Ascending aorta (tissue), 2 donors: ENCODE measurements at regions of chr3 and their contacts with region 1.

Region 1: DNA sequence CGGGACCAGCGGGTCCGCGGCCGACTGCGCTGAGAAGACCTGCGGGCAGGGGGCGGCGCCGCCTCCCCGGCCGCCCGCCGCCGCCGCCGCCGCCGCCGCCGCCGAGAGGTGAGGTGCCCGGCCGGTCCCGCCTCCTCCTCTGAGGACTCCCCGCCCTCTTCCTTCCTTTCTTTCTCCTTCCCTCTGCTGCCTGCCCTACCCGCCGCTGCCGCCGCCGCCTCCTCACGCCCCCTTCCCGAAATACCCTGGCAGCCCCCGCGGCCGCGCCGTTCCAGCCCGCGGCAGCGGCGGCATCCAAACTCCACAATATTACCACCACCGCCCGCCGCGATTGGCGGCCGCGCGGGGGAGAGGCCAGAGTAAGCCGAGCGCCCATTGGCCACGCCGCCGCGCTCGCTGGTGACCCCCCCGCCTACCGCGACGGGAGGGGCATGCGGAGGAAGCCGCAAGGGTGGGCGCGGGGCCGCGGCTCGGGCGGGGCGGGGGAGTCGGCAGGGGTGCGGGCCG is 61.8 kb upstream of the ANKRD28 start:
- DNase-seq: peak; percentile 53 to 92
- H3K4me3 ChIP-seq: peak overlapping the region; percentile 91 to 98
- H3K27ac ChIP-seq: peak overlapping the region; percentile 72 to 73
- H3K4me1 ChIP-seq: peaks cover 6 to 9% of the 10 kb centered on the region in 2 donors
- H3K27me3 ChIP-seq: no peaks in the 10 kb centered on the region
- CTCF ChIP-seq: no peak

Region 2: GRCh38 chr3:15768421-15769255 is 90.9 kb before region 1 on chr3:
- intact Hi-C with region 1: loop called (anchors 5 kb)
- DNase-seq: no peak
- H3K4me3 ChIP-seq: no peak overlapping the region
- H3K27ac ChIP-seq: peak overlapping the region; percentile 28 to 47
- H3K4me1 ChIP-seq: peaks cover 0 to 13% of the 10 kb centered on the region in 2 donors
- H3K27me3 ChIP-seq: no peaks in the 10 kb centered on the region
- CTCF ChIP-seq: no peak

Region 3: GRCh38 chr3:15815696-15816095 is 43.9 kb before region 1 on chr3:
- intact Hi-C with region 1: no loop called
- DNase-seq: no peak
- H3K4me3 ChIP-seq: no peak overlapping the region
- H3K27ac ChIP-seq: no peak overlapping the region
- H3K4me1 ChIP-seq: no peaks in the 10 kb centered on the region
- H3K27me3 ChIP-seq: no peaks in the 10 kb centered on the region
- CTCF ChIP-seq: peak; percentile 20 to 49 (median 28)

Region 4: DNA sequence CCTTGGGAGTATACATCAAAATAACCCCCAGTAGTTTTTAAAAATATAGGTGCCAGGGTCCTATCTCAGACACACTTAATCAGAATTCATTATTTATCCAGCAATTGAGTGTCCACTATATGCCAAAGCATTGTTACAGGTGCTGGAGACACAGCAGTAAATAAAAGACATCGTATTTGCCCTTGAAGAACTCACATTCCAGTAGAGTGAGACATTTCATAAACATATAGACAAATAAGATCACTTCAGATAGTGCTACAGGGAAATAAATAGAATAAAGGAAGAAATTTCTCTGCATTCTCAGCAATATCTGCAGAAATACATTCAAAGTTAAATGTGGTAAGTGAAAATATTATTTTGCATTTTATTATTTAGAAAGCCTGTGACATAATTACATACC is 27.6 kb before region 1 on chr3:
- intact Hi-C with region 1: no loop called
- DNase-seq: no peak
- H3K4me3 ChIP-seq: no peak overlapping the region
- H3K27ac ChIP-seq: no peak overlapping the region
- H3K4me1 ChIP-seq: peaks cover 0 to 5% of the 10 kb centered on the region in 2 donors
- H3K27me3 ChIP-seq: no peaks in the 10 kb centered on the region
- CTCF ChIP-seq: no peak

Region 5: DNA sequence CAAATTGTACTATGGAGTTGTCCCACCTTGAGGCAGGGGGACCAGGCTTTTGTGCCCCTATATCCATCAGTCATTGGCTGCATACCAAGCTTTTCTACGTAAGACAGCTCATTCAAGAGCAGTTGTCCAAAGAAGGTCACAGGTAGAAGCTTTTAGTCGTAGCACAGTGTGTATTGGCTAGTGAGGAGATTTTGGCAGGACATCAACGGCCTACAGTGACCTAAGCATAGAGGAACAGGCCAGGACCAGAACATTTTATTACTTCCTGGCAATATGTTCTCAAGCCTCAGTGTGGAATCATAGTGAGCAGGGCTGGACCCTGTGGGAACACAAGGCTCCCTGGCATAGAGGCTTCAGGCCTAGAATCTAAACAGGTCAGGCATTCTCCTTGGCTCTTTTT is 43.6 kb after region 1 on chr3:
- intact Hi-C with region 1: loop called (anchors 2 kb)
- DNase-seq: peak; percentile 31 to 89
- H3K4me3 ChIP-seq: no peak overlapping the region
- H3K27ac ChIP-seq: peak overlapping the region; percentile 86 to 92
- H3K4me1 ChIP-seq: peaks cover 10 to 26% of the 10 kb centered on the region in 2 donors
- H3K27me3 ChIP-seq: no peaks in the 10 kb centered on the region
- CTCF ChIP-seq: no peak